OCI-LY7 (cell line): ENCODE measurements at regions of chr9 and their contacts with region 1.

Region 1: GRCh38 chr9:37036776-37037502 is 2.9 kb upstream of the PAX5 start:
- DNase-seq: peak; percentile 78
- H3K4me3 ChIP-seq: peak overlapping the region; percentile 88
- H3K27ac ChIP-seq: peak overlapping the region; percentile 95
- H3K4me1 ChIP-seq: peaks cover 63% of the 10 kb centered on the region
- CTCF ChIP-seq: peak; percentile 20; the same call in 1 of the 2 replicates

Region 2: DNA sequence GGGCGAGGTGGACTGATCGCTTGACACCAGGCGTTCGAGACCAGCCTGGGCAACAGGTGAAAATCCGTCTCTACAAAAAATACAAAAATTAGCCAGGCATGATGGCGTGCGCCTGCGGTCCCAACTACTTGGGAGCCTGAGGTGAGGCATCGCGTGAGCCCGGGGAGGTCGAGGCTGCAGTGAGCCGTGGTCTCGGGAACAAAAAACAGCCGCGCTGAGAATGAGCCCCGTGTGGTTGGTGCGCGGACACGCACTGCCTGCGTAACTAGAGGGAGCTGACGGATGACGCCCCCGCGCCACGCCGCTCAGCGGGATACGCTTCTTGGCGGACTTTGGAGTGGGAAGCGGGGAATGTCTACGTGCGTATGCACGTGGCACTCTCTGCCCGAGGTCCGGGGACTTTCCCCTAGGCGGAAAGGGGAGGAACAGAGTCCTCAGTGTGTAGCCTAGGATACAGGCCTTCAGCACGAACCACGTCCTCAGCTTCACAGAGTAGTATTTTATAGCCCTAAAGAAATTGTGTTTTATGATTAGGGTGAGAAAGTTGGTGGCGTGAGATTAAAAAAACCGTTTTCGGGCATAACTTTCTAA is 1379.3 kb before region 1 on chr9 and contains the start of gene RMRP:
- CTCF ChIA-PET with region 1: no interaction called
- POLR2A ChIA-PET with region 1: no interaction called
- intact Hi-C with region 1: no loop called
- DNase-seq: peak; percentile 96
- H3K4me3 ChIP-seq: peak within 1 kb of the TSS; percentile 81
- H3K27ac ChIP-seq: peak within 1 kb of the TSS; percentile 84
- H3K4me1 ChIP-seq: peaks cover 64% of the 10 kb centered on the region
- CTCF ChIP-seq: 0 out of 2 replicates have a peak, but pooled peaks have one; percentile 27
- total RNA-seq, gene RMRP: 21,739 and 26,575 TPM in 2 replicates

Region 3: DNA sequence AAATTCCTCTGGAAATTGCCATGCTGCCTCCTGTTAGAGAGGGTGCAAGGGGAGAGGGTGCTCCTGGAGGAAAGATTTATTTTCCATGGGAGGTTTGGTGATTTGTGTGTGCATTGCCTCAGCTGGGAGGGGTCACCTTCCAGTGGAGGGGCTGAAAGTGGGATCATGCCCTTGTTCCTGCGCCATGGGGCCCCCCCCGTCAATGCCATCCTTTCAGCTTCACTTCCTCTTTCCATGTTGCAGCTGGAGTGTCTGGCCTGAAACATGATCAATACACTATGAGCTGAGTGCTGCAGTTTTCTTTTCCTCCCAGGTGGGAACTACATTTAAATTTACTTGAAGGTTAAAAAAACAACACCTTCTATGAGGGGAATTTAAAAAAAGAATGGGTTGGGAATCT is 287.5 kb before region 1 on chr9:
- CTCF ChIA-PET with region 1: no interaction called
- POLR2A ChIA-PET with region 1: no interaction called
- intact Hi-C with region 1: no loop called
- DNase-seq: no peak
- H3K4me3 ChIP-seq: no peak overlapping the region
- H3K27ac ChIP-seq: no peak overlapping the region
- H3K4me1 ChIP-seq: peaks cover 14% of the 10 kb centered on the region
- CTCF ChIP-seq: no peak

Region 4: DNA sequence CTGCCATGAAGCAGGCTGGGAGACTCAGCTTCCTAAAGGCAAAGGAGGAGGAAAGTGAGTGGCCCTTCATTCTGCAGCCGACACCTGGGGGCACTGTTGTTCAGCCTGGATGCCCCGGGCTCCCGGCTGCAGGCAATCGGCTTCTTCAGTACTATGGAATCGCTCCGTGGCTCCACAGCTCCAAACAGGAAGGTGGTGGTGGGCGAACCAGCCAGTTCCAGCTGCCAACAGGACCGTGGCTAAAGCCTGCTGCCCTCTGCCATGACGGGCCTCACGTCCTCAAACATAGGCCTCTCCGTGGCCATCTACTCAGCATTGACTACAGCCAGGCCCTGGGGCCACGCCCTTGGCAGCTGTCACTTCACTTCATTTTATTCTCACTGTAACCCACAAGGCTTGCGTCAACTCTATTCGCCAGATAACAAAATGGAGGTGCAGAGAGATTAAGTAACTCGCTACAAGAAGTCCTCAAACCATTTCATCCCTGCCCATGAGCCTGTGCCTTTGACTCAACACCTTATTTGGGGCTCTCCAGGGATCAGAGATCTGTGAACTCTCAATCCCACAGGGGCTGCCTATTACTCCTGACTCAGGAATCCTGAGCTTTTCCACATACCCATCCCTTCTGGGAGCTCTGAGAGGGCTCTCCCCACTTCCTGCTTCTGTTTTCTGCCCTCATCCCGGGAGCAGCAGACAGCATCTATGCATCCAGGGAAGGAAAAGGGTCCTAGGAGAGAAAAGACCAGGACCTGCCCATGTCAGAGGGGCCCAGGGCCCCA is 40.8 kb before region 1 on chr9:
- CTCF ChIA-PET with region 1: interaction called, 3 read pairs
- POLR2A ChIA-PET with region 1: interaction called, 6 read pairs
- intact Hi-C with region 1: loop called (anchors 2 kb)
- DNase-seq: peak; percentile 57
- H3K4me3 ChIP-seq: peak overlapping the region; percentile 17
- H3K27ac ChIP-seq: peak overlapping the region; percentile 64
- H3K4me1 ChIP-seq: peaks cover 87% of the 10 kb centered on the region
- CTCF ChIP-seq: peak; percentile 84

Region 5: GRCh38 chr9:37079370-37080164 is 42.6 kb after region 1 on chr9:
- CTCF ChIA-PET with region 1: interaction called, 5 read pairs
- POLR2A ChIA-PET with region 1: interaction called, 119 read pairs
- intact Hi-C with region 1: loop called (anchors 1 kb)
- DNase-seq: peak; percentile 97
- H3K4me3 ChIP-seq: peak overlapping the region; percentile 90
- H3K27ac ChIP-seq: peak overlapping the region; percentile 70
- H3K4me1 ChIP-seq: peaks cover 63% of the 10 kb centered on the region
- CTCF ChIP-seq: no peak

Region 6: GRCh38 chr9:37104183-37104889 is 67.4 kb after region 1 on chr9:
- CTCF ChIA-PET with region 1: no interaction called
- POLR2A ChIA-PET with region 1: no interaction called
- intact Hi-C with region 1: no loop called
- DNase-seq: no peak
- H3K4me3 ChIP-seq: no peak overlapping the region
- H3K27ac ChIP-seq: no peak overlapping the region
- H3K4me1 ChIP-seq: peaks cover 35% of the 10 kb centered on the region
- CTCF ChIP-seq: no peak

Region 7: GRCh38 chr9:37144762-37145161 is 107.8 kb after region 1 on chr9:
- CTCF ChIA-PET with region 1: no interaction called
- POLR2A ChIA-PET with region 1: interaction called, 9 read pairs
- intact Hi-C with region 1: loop called (anchors 5 kb)
- DNase-seq: peak; percentile 65
- H3K4me3 ChIP-seq: peak overlapping the region; percentile 61
- H3K27ac ChIP-seq: peak overlapping the region; percentile 74
- H3K4me1 ChIP-seq: peaks cover 85% of the 10 kb centered on the region
- CTCF ChIP-seq: no peak

Region 8: DNA sequence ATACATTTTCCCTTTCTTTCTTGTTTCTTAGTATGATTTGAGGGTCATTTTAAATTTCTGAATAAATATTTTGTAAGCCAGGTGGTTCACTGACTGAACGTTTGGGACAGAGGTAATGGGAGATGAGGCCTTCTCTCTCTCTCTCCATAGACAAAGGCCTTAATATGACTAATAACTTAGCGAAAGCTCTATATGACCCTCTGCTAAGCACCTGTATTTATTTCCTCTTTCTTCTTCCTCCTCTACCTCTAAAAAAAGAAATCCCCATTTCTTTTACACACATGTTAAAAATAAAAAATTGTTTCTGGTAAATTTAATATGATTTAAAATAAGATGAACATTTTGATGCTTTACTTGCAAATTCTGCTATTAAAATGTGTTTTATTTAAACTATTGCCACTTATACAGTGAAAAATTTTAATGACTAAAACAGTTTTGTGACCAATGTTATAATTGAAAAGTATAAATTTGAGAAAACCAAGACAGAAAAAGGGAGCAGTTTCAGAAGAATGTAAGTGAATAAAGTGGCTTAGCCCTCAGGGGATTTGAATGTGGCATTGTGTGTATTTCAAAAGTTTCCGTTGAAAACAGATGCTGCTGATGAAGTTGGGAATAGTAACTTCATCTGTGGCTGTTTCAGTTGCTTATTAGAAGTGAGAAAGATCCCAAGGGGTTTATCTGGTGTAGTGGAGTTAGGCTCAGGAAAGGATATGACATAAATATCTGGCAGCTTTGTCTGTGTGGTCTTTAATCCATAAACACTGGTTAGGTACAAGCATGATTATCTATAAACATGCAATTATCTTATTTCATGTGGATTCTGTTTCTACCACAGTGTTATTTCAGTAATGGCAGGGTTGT is 257.0 kb after region 1 on chr9:
- CTCF ChIA-PET with region 1: interaction called, 5 read pairs
- POLR2A ChIA-PET with region 1: interaction called, 5 read pairs
- intact Hi-C with region 1: loop called (anchors 2 kb)
- DNase-seq: peak; percentile 97
- H3K4me3 ChIP-seq: peak overlapping the region; percentile 46
- H3K27ac ChIP-seq: peak overlapping the region; percentile 99
- H3K4me1 ChIP-seq: peaks cover 100% of the 10 kb centered on the region
- CTCF ChIP-seq: no peak

Region 9: GRCh38 chr9:37415011-37415719 is 378.2 kb after region 1 on chr9:
- CTCF ChIA-PET with region 1: no interaction called
- POLR2A ChIA-PET with region 1: interaction called, 10 read pairs
- intact Hi-C with region 1: loop called (anchors 2 kb)
- DNase-seq: peak; percentile 92
- H3K4me3 ChIP-seq: peak overlapping the region; percentile 55
- H3K27ac ChIP-seq: peak overlapping the region; percentile 97
- H3K4me1 ChIP-seq: peaks cover 94% of the 10 kb centered on the region
- CTCF ChIP-seq: peak; percentile 92